PC-3 (cell line): ENCODE measurements at regions of chr12 and their contacts with region 1.

Region 1: DNA sequence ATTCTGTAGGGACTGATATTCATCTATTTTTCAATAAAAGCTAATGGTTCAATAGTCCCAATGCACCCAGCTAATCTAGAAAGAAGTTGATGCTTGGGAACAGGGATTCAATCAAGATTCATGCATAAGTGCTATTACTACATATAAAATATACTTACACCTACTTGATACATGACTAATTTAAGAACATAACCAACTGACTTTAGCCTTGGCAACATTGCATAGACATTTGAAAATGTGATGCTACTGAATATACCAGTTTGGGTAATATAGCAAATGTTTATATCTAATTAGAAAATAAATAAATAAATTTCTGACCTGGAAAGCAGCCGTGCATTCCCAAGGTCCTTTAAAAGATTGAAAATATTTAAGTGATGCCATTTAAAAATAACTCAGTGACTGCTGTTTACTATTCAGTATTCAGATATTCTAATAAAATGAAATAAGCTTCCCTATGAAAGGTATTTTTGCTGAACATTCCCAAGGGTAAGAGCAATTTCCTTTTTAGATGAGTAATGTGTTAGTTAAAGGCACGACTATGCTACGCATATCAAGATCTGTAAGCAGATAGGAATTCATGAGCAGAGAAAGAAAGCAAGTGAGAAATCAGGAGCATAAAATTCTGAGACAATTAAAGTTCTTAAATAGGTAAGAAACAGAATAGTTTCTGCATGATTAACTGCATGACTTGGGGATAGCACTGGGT is 160.6 kb upstream of the SYT1 start:
- DNase-seq: peak; percentile 92
- ATAC-seq: peak; percentile 96
- H3K4me3 ChIP-seq: peak overlapping the region; percentile 7; the same call in 1 of the 2 replicates
- H3K27ac ChIP-seq: peak overlapping the region; percentile 88
- H3K4me1 ChIP-seq: peaks cover 38% of the 10 kb centered on the region
- H3K27me3 ChIP-seq: no peaks in the 10 kb centered on the region
- CTCF ChIP-seq: no peak

Region 2: GRCh38 chr12:78406828-78407227 is 297.1 kb before region 1 on chr12:
- CTCF ChIA-PET with region 1: no interaction called
- POLR2A ChIA-PET with region 1: no interaction called
- intact Hi-C with region 1: loop called (anchors 5 kb)
- DNase-seq: no peak
- ATAC-seq: peak; percentile 6
- H3K4me3 ChIP-seq: no peak overlapping the region
- H3K27ac ChIP-seq: peak overlapping the region; percentile 17
- H3K4me1 ChIP-seq: peaks cover 39% of the 10 kb centered on the region
- H3K27me3 ChIP-seq: no peaks in the 10 kb centered on the region
- CTCF ChIP-seq: no peak

Region 3: GRCh38 chr12:78568321-78569020 is 135.5 kb before region 1 on chr12:
- CTCF ChIA-PET with region 1: no interaction called
- POLR2A ChIA-PET with region 1: no interaction called
- intact Hi-C with region 1: loop called (anchors 2 kb)
- DNase-seq: peak; percentile 71
- ATAC-seq: peak; percentile 98
- H3K4me3 ChIP-seq: no peak overlapping the region
- H3K27ac ChIP-seq: peak overlapping the region; percentile 63
- H3K4me1 ChIP-seq: peaks cover 15% of the 10 kb centered on the region
- H3K27me3 ChIP-seq: no peaks in the 10 kb centered on the region
- CTCF ChIP-seq: no peak

Region 4: GRCh38 chr12:78719721-78720120 is 15.7 kb after region 1 on chr12:
- CTCF ChIA-PET with region 1: no interaction called
- POLR2A ChIA-PET with region 1: no interaction called
- intact Hi-C with region 1: no loop called
- DNase-seq: no peak
- ATAC-seq: no peak
- H3K4me3 ChIP-seq: no peak overlapping the region
- H3K27ac ChIP-seq: no peak overlapping the region
- H3K4me1 ChIP-seq: no peaks in the 10 kb centered on the region; the same call in 1 of the 2 replicates
- H3K27me3 ChIP-seq: no peaks in the 10 kb centered on the region
- CTCF ChIP-seq: no peak

Region 5: GRCh38 chr12:78863482-78864402 is 159.8 kb after region 1 on chr12:
- CTCF ChIA-PET with region 1: no interaction called
- POLR2A ChIA-PET with region 1: no interaction called
- intact Hi-C with region 1: loop called (anchors 10 kb)
- DNase-seq: peak; percentile 53
- ATAC-seq: peak; percentile 73
- H3K4me3 ChIP-seq: peak overlapping the region; percentile 79
- H3K27ac ChIP-seq: no peak overlapping the region
- H3K4me1 ChIP-seq: no peaks in the 10 kb centered on the region
- H3K27me3 ChIP-seq: peaks cover 6% of the 10 kb centered on the region
- CTCF ChIP-seq: no peak